ENCODE measurements at regions of chr2 and their contacts with region 1.

Region 1: GRCh38 chr2:233247765-233248164 is 3.7 kb upstream of the ATG16L1 start:
- DNase-seq: no peak
- ATAC-seq: no peak
- H3K4me3 ChIP-seq: no peak overlapping the region
- H3K27ac ChIP-seq: no peak overlapping the region
- H3K4me1 ChIP-seq: peaks cover 5% of the 10 kb centered on the region
- H3K27me3 ChIP-seq: no peaks in the 10 kb centered on the region
- CTCF ChIP-seq: no peak
- POLR2A ChIP-seq: no peak

Region 2: DNA sequence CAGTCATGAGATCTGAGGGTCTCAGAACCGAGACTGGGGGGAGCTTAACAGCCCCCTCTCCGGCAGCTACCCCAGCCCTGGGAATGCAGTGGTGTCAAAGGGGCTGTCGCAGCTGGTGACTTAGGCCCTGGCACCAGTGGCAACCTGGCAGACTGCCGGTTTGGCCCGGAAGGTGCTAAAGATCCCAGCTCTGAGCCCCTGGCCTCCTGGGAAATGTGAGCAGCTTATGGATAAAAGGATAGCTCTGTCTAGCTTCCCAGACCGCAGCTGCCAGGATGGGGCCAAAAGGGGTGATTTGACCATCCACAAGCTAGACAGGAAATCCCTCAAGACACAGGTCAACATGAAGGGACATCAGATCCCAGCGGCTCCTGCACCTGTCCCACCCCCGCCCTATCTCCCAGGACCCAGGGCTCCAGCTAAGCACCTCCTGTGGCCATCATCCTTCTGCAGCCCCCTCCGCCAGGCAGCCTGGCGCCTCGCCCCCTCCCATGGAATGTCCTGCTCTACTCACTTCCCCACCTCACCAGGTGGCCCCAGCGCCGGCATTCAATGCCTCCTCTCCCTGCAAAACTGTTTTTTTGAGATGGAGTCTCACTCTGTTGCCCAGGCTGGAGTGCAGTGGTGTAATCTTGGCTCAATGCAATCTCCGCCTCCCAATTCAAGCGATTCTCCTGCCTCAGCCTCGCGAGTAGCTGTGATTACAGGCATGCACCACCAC is 647.6 kb before region 1 on chr2:
- intact Hi-C with region 1: loop called (anchors 10 kb)
- DNase-seq: peak in 2 of 4 donors; percentile 34 to 42
- ATAC-seq: no peak
- H3K4me3 ChIP-seq: no peak overlapping the region
- H3K27ac ChIP-seq: no peak overlapping the region
- H3K4me1 ChIP-seq: no peaks in the 10 kb centered on the region
- H3K27me3 ChIP-seq: no peaks in the 10 kb centered on the region
- CTCF ChIP-seq: no peak
- POLR2A ChIP-seq: no peak

Region 3: GRCh38 chr2:232854082-232854481 is 393.7 kb before region 1 on chr2:
- intact Hi-C with region 1: loop called (anchors 10 kb)
- DNase-seq: peak in 1 of 4 donors; percentile 20
- ATAC-seq: no peak
- H3K4me3 ChIP-seq: no peak overlapping the region
- H3K27ac ChIP-seq: no peak overlapping the region
- H3K4me1 ChIP-seq: peaks cover 4% of the 10 kb centered on the region
- H3K27me3 ChIP-seq: no peaks in the 10 kb centered on the region
- CTCF ChIP-seq: no peak
- POLR2A ChIP-seq: no peak

Region 4: GRCh38 chr2:233100192-233100998 is 147.4 kb before region 1 on chr2:
- intact Hi-C with region 1: loop called (anchors 5 kb)
- DNase-seq: no peak
- ATAC-seq: no peak
- H3K4me3 ChIP-seq: no peak overlapping the region
- H3K27ac ChIP-seq: no peak overlapping the region
- H3K4me1 ChIP-seq: no peaks in the 10 kb centered on the region
- H3K27me3 ChIP-seq: no peaks in the 10 kb centered on the region
- CTCF ChIP-seq: no peak
- POLR2A ChIP-seq: no peak

Region 5: DNA sequence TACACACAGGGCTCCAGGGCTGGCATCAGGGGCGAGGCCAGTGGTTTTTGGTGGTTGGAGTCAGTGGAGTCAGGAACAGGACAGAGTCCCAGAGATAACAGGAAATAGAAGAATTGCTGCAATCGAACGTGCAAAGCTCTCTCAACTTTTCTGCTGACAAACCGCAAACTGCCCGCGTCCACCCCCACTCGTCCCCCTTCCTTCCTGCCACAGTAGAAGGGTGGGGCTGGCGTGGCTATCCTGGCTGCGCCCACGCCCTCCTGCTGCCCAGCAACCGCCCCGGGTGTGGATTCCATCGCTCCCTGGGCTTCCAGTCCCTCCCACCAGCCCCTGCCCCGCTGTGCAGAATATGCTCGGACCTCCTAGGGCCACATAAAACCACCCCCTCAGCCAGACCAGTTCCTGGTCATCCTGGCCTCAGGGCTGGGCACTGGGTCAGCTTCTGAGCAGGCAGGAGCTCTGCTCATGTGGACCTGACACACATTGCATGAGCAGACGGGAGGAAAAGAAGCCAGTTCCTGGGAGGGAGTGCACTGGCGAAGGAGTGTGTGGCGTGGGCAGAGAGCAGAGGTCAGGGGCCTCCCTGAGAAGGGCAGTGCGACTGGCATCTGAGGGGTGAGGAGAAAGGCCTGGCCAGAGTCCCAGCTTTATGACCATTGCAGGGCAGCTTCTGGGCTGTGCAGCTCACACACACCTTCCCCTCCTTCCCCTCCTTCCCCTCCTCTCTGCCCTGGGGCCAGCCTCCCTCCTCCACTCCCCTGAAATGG is 81.7 kb before region 1 on chr2:
- intact Hi-C with region 1: no loop called
- DNase-seq: peak in 2 of 4 donors; percentile 16 to 59
- ATAC-seq: no peak
- H3K4me3 ChIP-seq: no peak overlapping the region
- H3K27ac ChIP-seq: no peak overlapping the region
- H3K4me1 ChIP-seq: no peaks in the 10 kb centered on the region
- H3K27me3 ChIP-seq: no peaks in the 10 kb centered on the region
- CTCF ChIP-seq: no peak
- POLR2A ChIP-seq: no peak

Measured in body of pancreas (tissue), 4 donors.